PC-3 (cell line): ENCODE measurements at regions of chrX and their contacts with region 1.

Region 1: DNA sequence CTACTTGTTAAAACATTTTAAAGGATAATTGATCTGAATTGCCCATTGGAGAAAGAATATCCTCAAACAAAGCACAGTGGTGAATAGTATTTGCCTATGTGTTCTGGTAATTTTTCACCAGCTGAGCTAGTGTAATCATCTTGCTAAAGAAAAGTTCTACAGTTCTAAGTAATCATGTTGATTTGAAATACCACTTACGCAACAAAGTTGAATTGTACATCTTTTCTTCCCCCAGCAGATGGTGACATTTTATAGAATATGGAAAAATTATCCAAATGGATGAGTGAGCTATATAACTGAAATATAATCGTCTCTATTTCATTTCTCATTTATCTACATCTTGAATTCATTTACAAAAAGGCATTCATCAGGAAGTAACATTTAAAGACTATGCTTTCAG is 9.7 kb upstream of the ZNF674 start:
- DNase-seq: peak; percentile 63
- ATAC-seq: no peak
- H3K4me3 ChIP-seq: no peak overlapping the region
- H3K27ac ChIP-seq: no peak overlapping the region
- H3K4me1 ChIP-seq: no peaks in the 10 kb centered on the region
- H3K27me3 ChIP-seq: no peaks in the 10 kb centered on the region
- CTCF ChIP-seq: peak; percentile 66

Region 2: DNA sequence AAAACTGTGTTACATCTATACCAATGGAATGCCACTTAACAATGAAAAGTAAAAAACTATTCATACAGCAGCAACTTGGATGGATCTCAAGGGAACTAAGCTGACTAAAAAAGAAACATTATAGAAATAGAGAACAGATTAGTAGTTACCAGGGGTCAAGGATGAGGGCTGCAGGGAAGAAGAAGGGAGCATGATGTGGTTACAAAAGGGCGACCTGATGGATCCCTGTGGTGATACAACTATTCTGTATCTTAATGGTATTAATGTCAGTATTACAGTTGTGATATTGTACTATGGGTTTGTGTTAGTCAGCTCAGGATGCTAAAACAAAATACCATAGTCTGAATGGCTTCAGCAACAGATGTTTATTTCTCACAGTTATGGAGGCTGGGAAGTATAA is 200.5 kb before region 1 on chrX:
- CTCF ChIA-PET with region 1: no interaction called
- POLR2A ChIA-PET with region 1: no interaction called
- intact Hi-C with region 1: no loop called
- DNase-seq: no peak
- ATAC-seq: no peak
- H3K4me3 ChIP-seq: no peak overlapping the region
- H3K27ac ChIP-seq: no peak overlapping the region
- H3K4me1 ChIP-seq: no peaks in the 10 kb centered on the region
- H3K27me3 ChIP-seq: no peaks in the 10 kb centered on the region
- CTCF ChIP-seq: no peak

Region 3: GRCh38 chrX:46573331-46573891 is 18.5 kb after region 1 on chrX and contains the start of gene CHST7:
- CTCF ChIA-PET with region 1: interaction called, 9 read pairs
- POLR2A ChIA-PET with region 1: no interaction called
- intact Hi-C with region 1: loop called (anchors 2 kb)
- DNase-seq: peak; percentile 76
- ATAC-seq: peak; percentile 72
- H3K4me3 ChIP-seq: peak within 1 kb of the TSS; percentile 94
- H3K27ac ChIP-seq: peak within 1 kb of the TSS; percentile 69
- H3K4me1 ChIP-seq: peaks cover 32% of the 10 kb centered on the region
- H3K27me3 ChIP-seq: no peaks in the 10 kb centered on the region
- CTCF ChIP-seq: peak; percentile 56
- total RNA-seq, gene CHST7: 24.7 and 31.9 TPM in 2 replicates

Region 4: DNA sequence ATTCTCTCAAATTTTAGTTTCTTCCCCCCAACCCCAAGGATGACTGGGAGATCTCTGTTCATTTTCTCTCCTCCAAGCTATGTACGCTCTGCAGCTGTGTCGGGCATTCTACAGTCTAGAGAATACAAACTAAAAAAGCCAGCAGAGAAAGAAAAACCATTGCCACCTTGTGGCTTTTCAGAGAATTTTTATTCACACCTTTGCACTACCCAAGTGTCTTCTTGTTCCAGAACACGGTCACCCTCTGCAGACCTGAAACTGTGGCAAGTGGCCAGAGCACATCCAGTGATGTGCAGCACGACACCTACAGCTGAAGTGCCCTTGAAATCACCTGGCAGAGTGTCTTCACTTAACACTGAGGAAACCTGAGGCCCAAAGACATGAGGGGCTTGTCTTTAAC is 87.2 kb after region 1 on chrX:
- CTCF ChIA-PET with region 1: interaction called, 10 read pairs
- POLR2A ChIA-PET with region 1: no interaction called
- intact Hi-C with region 1: loop called (anchors 1 kb)
- DNase-seq: peak; percentile 34
- ATAC-seq: peak; percentile 61
- H3K4me3 ChIP-seq: no peak overlapping the region
- H3K27ac ChIP-seq: no peak overlapping the region
- H3K4me1 ChIP-seq: no peaks in the 10 kb centered on the region
- H3K27me3 ChIP-seq: no peaks in the 10 kb centered on the region
- CTCF ChIP-seq: peak; percentile 50

Region 5: GRCh38 chrX:46686003-46686645 is 131.2 kb after region 1 on chrX:
- CTCF ChIA-PET with region 1: no interaction called
- POLR2A ChIA-PET with region 1: no interaction called
- intact Hi-C with region 1: loop called (anchors 5 kb)
- DNase-seq: peak; percentile 53
- ATAC-seq: peak; percentile 65
- H3K4me3 ChIP-seq: no peak overlapping the region
- H3K27ac ChIP-seq: no peak overlapping the region
- H3K4me1 ChIP-seq: peaks cover 10% of the 10 kb centered on the region; the same call in 1 of the 2 replicates
- H3K27me3 ChIP-seq: no peaks in the 10 kb centered on the region
- CTCF ChIP-seq: peak; percentile 83

Region 6: GRCh38 chrX:46796574-46797191 is 241.7 kb after region 1 on chrX:
- CTCF ChIA-PET with region 1: no interaction called
- POLR2A ChIA-PET with region 1: no interaction called
- intact Hi-C with region 1: loop called (anchors 1 kb)
- DNase-seq: peak; percentile 86
- ATAC-seq: peak; percentile 42
- H3K4me3 ChIP-seq: no peak overlapping the region
- H3K27ac ChIP-seq: no peak overlapping the region
- H3K4me1 ChIP-seq: peaks cover 29% of the 10 kb centered on the region
- H3K27me3 ChIP-seq: no peaks in the 10 kb centered on the region
- CTCF ChIP-seq: peak; percentile 88

Region 7: DNA sequence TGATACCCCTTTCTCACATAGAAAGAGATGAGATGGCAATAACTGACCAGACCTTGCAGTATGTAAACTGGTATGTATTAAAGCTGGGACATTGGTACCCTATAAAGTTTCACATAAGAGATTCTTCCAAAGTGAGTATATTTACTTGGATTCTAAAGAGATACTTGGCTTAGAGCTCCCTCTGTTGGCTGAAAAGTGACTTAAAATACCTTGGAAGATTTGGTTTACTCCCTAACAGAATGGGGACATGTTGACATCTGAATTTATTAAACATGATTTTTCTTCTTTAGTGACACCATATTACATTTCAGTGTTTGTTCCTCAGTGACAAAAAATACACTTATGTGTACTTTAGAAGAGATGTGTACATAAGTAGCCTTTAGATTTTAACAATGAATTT is 475.4 kb after region 1 on chrX:
- CTCF ChIA-PET with region 1: interaction called, 11 read pairs
- POLR2A ChIA-PET with region 1: no interaction called
- intact Hi-C with region 1: no loop called
- DNase-seq: peak; percentile 89
- ATAC-seq: peak; percentile 64
- H3K4me3 ChIP-seq: no peak overlapping the region
- H3K27ac ChIP-seq: no peak overlapping the region
- H3K4me1 ChIP-seq: no peaks in the 10 kb centered on the region
- H3K27me3 ChIP-seq: no peaks in the 10 kb centered on the region
- CTCF ChIP-seq: peak; percentile 74